PC-9 (cell line): ENCODE measurements at regions of chr13 and their contacts with region 1.

Region 1: DNA sequence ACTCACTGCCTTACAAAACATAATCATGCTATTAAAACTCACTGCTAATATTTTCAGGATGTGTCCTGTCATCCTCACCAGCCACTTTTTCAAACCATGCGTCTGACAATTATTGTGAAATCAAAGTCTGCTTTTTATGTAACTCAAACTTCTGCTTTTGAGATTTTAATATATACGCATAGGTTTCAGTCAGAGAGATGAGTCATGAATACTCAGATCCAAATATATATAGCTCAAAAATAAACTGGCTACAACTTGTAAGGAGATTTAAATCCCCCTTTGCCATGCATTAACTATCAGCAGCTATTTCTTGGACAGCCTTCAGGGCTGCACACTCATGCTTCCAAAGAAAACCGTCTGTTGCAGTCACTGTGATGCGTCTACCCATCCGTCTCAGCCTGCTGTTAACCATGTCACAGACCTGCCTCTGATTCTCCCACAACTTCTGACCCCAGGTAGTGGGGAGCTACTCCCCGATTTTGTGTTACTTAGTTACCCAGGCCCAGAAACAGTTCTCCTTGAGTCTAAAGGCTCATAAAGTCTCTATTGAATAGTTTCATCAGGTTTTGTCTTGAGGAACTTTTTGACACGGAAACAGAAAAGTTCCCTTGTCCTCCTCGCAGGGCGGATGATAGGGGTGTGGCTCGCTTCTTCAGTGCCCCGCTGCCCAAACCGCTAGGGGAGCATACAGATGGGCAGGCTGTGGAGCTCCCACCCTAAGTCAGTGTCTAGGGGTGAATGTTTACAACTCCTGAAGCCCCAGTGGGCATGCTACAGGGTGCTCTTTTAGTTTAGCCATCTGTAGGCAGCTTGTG is 33.8 kb upstream of the SGCG start:
- DNase-seq: no peak
- H3K4me3 ChIP-seq: no peak overlapping the region
- H3K27ac ChIP-seq: no peak overlapping the region
- H3K4me1 ChIP-seq: no peaks in the 10 kb centered on the region
- H3K27me3 ChIP-seq: peaks cover 41% of the 10 kb centered on the region; the same call in 1 of the 2 replicates
- CTCF ChIP-seq: no peak

Region 2: GRCh38 chr13:21517576-21517975 is 1629.4 kb before region 1 on chr13:
- CTCF ChIA-PET with region 1: interaction called, 12 read pairs
- POLR2A ChIA-PET with region 1: no interaction called
- intact Hi-C with region 1: no loop called
- DNase-seq: no peak
- H3K4me3 ChIP-seq: no peak overlapping the region
- H3K27ac ChIP-seq: no peak overlapping the region
- H3K4me1 ChIP-seq: no peaks in the 10 kb centered on the region
- H3K27me3 ChIP-seq: no peaks in the 10 kb centered on the region
- CTCF ChIP-seq: no peak